ENCODE measurements at regions of chr15 and their contacts with region 1.

Region 1: GRCh38 chr15:58785355-58785754 is 14.3 kb downstream of the MINDY2 start:
- DNase-seq: no peak
- H3K4me3 ChIP-seq: no peak overlapping the region
- H3K27ac ChIP-seq: no peak overlapping the region
- H3K4me1 ChIP-seq: no peaks in the 10 kb centered on the region
- CTCF ChIP-seq: no peak

Region 2: GRCh38 chr15:58555162-58556027 is 230.0 kb before region 1 on chr15:
- CTCF ChIA-PET with region 1: no interaction called
- POLR2A ChIA-PET with region 1: no interaction called
- intact Hi-C with region 1: no loop called
- DNase-seq: no peak
- H3K4me3 ChIP-seq: no peak overlapping the region
- H3K27ac ChIP-seq: no peak overlapping the region
- H3K4me1 ChIP-seq: peaks cover 5% of the 10 kb centered on the region
- CTCF ChIP-seq: no peak

Region 3: DNA sequence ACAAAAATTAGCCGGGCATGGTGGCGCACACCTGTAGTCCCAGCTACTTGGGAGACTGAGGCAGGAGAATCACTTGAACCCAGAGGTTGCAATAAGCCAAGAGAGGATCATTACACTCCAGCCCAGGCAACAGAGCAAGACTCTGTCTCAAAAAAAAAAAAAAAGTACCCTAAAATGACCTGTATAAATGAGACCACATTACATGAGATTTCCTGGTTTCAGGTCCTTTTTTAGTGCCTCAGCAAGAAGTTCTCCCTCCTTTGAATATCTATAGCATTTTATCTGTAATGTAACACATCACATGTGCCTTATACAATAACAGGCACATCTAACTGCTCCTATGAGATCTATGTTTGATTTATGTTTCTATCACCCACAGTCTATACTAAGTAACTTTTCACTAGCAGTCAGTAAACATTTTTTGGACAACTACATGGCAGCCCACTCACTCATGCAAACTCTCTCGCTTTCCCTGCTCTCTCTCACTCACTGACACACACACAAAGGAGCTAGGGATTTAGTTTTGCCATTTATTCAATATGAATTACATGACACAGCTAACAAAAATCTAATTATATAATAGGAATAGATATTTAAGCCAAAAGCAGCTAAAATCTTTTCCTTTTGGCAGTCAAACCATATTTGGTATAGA is 70.0 kb before region 1 on chr15:
- CTCF ChIA-PET with region 1: no interaction called
- POLR2A ChIA-PET with region 1: no interaction called
- intact Hi-C with region 1: no loop called
- DNase-seq: peak; percentile 54
- H3K4me3 ChIP-seq: no peak overlapping the region
- H3K27ac ChIP-seq: no peak overlapping the region
- H3K4me1 ChIP-seq: peaks cover 20% of the 10 kb centered on the region
- CTCF ChIP-seq: no peak

Region 4: DNA sequence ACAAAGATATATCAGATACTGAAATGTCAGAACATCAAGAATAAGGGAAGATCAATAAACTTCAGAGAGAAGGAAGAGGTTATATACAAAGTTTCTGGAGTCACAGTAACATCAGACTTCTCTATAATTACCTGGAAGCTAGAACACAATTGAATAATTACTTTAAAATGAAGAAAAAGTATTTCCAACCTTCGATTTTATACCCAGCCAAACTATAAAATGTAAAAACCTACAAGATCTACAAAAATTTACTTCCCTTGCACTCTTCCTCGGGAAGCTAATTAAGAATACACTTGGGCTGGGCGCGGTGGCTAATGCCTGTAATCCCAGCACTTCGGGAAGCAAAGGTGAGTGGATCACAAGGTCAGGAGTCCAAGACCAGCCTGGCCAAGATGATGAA is 20.9 kb before region 1 on chr15:
- CTCF ChIA-PET with region 1: no interaction called
- POLR2A ChIA-PET with region 1: interaction called, 14 read pairs
- intact Hi-C with region 1: no loop called
- DNase-seq: no peak
- H3K4me3 ChIP-seq: no peak overlapping the region
- H3K27ac ChIP-seq: no peak overlapping the region
- H3K4me1 ChIP-seq: no peaks in the 10 kb centered on the region
- CTCF ChIP-seq: no peak

Region 5: DNA sequence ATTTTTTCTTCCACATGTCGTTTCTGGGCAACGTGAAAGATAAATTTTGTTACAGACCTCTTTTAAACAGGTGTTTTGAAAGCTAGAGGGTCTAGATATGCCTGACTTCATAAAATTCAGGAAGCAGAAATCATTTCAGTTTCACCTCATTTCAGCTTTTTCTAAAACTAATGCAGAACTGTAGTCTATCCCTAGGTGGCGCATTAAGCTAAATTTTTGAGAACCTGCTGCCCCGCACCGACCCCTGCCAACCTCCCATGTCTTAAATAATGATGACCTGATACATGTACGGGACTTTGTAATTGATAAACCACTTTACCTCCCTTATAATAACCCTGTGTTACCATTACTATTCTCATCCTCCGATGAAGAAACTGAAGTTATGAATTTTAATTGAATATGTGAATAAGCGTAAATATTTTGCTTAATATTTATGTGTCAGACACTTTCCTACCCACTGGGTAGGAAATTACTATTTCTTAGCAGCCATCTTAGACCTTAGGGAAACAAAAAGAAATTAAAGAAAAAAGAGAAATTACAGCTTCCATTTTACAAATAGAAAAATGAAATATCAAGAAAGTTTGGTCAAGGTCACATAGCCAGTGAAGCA is 747.5 kb after region 1 on chr15:
- CTCF ChIA-PET with region 1: no interaction called
- POLR2A ChIA-PET with region 1: no interaction called
- intact Hi-C with region 1: no loop called
- DNase-seq: peak; percentile 84
- H3K4me3 ChIP-seq: no peak overlapping the region
- H3K27ac ChIP-seq: peak overlapping the region; percentile 0
- H3K4me1 ChIP-seq: peaks cover 45% of the 10 kb centered on the region
- CTCF ChIP-seq: peak; percentile 97

Measured in OCI-LY7 (cell line).